ENCODE measurements at regions of chr14 and their contacts with region 1.

Region 1: GRCh38 chr14:20343092-20343861 is at the start of gene PARP2:
- DNase-seq: peak; percentile 95 to 97
- H3K4me3 ChIP-seq: peak within 1 kb of the TSS; percentile 87
- H3K27ac ChIP-seq: peak within 1 kb of the TSS; percentile 94
- H3K4me1 ChIP-seq: 0 out of 2 replicates have a peak, but pooled peaks cover 8% of the 10 kb centered on the region
- H3K27me3 ChIP-seq: no peaks in the 10 kb centered on the region
- CTCF ChIP-seq: no peak
- total RNA-seq, gene PARP2: 22.1 and 23.3 TPM in 2 replicates

Region 2: DNA sequence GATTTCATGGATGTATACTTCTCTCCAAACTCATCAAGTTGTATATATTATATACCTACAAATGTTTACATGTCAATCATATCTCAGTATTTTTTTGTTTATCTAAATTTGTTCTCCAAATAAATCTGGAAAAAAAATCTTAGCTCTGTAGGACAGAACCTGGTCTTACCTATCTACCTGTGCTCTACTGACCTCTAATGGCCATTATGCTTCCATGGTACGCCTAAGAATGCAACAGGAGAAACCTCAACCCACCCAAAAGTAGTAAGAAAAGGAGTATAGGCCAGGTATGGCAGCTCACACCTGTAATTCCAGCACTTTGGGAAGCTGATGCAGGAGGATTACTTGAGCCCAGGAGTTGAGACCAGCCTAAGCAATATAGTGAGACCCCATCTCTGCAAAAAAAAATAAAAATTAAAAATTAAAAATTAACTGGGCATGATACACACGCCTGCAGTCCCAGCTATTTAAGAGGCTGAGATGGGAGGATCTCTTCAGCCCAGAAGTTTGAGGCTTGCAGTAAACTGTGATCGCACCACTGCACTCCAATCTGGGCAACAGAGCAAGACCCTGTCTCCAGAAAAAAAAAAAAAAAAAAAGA is 95.5 kb before region 1 on chr14:
- CTCF ChIA-PET with region 1: no interaction called
- POLR2A ChIA-PET with region 1: no interaction called
- intact Hi-C with region 1: no loop called
- DNase-seq: peak in 1 of 2 experiments; percentile 35
- H3K4me3 ChIP-seq: no peak overlapping the region
- H3K27ac ChIP-seq: no peak overlapping the region
- H3K4me1 ChIP-seq: no peaks in the 10 kb centered on the region
- H3K27me3 ChIP-seq: no peaks in the 10 kb centered on the region
- CTCF ChIP-seq: peak; percentile 56

Region 3: GRCh38 chr14:20327005-20327869 is 16.0 kb before region 1 on chr14:
- CTCF ChIA-PET with region 1: interaction called, 8 read pairs
- POLR2A ChIA-PET with region 1: interaction called, 13 read pairs
- intact Hi-C with region 1: no loop called
- DNase-seq: no peak
- H3K4me3 ChIP-seq: no peak overlapping the region
- H3K27ac ChIP-seq: no peak overlapping the region
- H3K4me1 ChIP-seq: peaks cover 8% of the 10 kb centered on the region; the same call in 1 of the 2 replicates
- H3K27me3 ChIP-seq: no peaks in the 10 kb centered on the region
- CTCF ChIP-seq: peak; percentile 71

Region 4: DNA sequence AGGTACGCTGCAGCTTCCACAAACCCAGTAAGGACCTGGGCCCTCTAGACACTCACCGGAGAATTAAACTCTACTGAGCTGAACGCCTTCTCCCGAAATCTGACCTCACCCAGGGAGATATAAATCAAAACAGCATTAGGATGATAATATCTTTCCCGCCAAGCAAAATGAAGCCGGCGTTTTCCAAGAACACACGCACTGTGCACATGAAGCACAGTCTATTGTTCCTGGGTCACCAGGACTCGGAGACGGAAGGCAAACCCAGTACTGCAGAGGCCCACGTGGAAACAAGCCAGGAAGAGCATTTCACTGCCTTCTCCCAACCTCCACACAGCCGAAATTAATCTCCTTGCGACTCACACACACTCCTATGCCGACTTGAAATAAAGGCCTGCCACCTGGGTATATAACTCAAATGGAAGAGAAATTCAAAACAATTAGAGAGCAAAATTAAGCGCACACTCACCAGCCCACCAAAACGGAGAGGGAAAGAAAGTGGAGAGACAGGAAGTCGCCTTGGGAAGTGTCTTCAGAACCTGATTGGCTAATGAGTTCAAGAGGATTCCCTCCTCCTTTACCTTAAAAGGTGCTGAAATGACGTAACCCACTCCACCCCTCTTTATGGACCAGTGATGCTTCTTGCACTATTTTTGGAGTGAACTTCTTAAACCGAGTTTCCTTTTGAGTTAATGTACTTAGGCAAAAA is 10.3 kb before region 1 on chr14 and contains the start of gene CCNB1IP1:
- CTCF ChIA-PET with region 1: interaction called, 8 read pairs
- POLR2A ChIA-PET with region 1: interaction called, 16 read pairs
- intact Hi-C with region 1: no loop called
- DNase-seq: peak; percentile 42 to 84
- H3K4me3 ChIP-seq: peak within 1 kb of the TSS; percentile 88
- H3K27ac ChIP-seq: peak within 1 kb of the TSS; percentile 56
- H3K4me1 ChIP-seq: peaks cover 12% of the 10 kb centered on the region; the same call in 1 of the 2 replicates
- H3K27me3 ChIP-seq: no peaks in the 10 kb centered on the region
- CTCF ChIP-seq: no peak
- total RNA-seq, gene CCNB1IP1: 30.8 and 34.0 TPM in 2 replicates

Region 5: DNA sequence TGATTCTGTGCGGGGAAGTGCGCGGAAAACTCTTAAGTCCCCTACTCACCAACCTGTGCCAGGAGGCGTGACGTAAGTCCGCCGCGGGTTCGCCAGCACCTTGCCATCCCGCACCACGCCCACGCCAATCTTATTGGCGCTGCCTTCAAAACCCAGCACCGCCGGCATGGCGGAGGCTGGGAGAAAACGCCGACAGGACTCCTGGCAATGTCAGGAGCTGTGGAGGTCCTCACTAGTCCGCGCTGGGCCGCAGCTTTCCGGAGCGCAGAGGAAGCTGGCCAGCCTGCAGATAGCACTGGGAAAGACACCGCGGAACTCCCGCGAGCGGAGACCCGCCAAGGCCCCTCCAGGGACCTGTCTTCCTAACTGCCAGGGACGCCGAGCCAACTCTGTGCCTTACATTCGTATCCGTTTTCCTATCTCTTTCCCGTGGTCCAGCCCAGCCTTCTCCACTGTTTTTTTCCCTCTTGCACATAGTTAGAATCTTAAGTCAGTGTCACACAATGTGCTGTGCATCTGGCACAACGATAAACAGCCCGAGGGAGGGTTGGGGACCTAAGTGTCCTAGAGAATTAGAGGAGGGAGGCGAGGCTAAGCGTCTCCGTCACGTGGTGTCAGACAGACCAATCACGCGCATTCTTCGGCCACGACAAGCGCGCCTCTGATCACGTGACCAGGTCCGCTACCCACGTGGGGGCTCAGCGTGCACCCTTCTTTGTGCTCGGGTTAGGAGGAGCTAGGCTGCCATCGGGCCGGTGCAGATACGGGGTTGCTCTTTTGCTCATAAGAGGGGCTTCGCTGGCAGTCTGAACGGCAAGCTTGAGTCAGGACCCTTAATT is 111.5 kb after region 1 on chr14 and contains the starts of genes APEX1 and OSGEP:
- CTCF ChIA-PET with region 1: interaction called, 3 read pairs
- POLR2A ChIA-PET with region 1: interaction called, 28 read pairs
- intact Hi-C with region 1: no loop called
- DNase-seq: peak; percentile 91 to 92
- H3K4me3 ChIP-seq: peak within 1 kb of the TSS; percentile 77
- H3K27ac ChIP-seq: peak within 1 kb of the TSS; percentile 72
- H3K4me1 ChIP-seq: peaks cover 16% of the 10 kb centered on the region
- H3K27me3 ChIP-seq: no peaks in the 10 kb centered on the region
- CTCF ChIP-seq: no peak
- total RNA-seq, gene APEX1: 107 and 113 TPM in 2 replicates
- total RNA-seq, gene OSGEP: 17.2 and 20.6 TPM in 2 replicates

Region 6: GRCh38 chr14:20461274-20462001 is 118.2 kb after region 1 on chr14 and contains the start of gene PIP4P1:
- CTCF ChIA-PET with region 1: interaction called, 3 read pairs
- POLR2A ChIA-PET with region 1: interaction called, 31 read pairs
- intact Hi-C with region 1: loop called (anchors 10 kb)
- DNase-seq: peak; percentile 92 to 99
- H3K4me3 ChIP-seq: peak within 1 kb of the TSS; percentile 74
- H3K27ac ChIP-seq: peak within 1 kb of the TSS; percentile 64
- H3K4me1 ChIP-seq: peaks cover 15% of the 10 kb centered on the region
- H3K27me3 ChIP-seq: no peaks in the 10 kb centered on the region
- CTCF ChIP-seq: no peak
- total RNA-seq, gene PIP4P1: 20.1 and 22.2 TPM in 2 replicates

Region 7: GRCh38 chr14:20578784-20579502 is 235.7 kb after region 1 on chr14:
- CTCF ChIA-PET with region 1: no interaction called
- POLR2A ChIA-PET with region 1: no interaction called
- intact Hi-C with region 1: no loop called
- DNase-seq: no peak
- H3K4me3 ChIP-seq: no peak overlapping the region
- H3K27ac ChIP-seq: no peak overlapping the region
- H3K4me1 ChIP-seq: no peaks in the 10 kb centered on the region
- H3K27me3 ChIP-seq: no peaks in the 10 kb centered on the region
- CTCF ChIP-seq: no peak

Measured in PC-9 (cell line).